A549 (cell line): ENCODE measurements at regions of chr11 and their contacts with region 1.

Region 1: GRCh38 chr11:128956401-128957201 is 13.9 kb upstream of the TP53AIP1 start:
- DNase-seq: peak; percentile 62 to 76
- ATAC-seq: peak; percentile 95 to 96
- H3K4me3 ChIP-seq: no peak overlapping the region
- H3K27ac ChIP-seq: no peak overlapping the region
- H3K4me1 ChIP-seq: no peaks in the 10 kb centered on the region
- CTCF ChIP-seq: peak; percentile 65
- EP300 ChIP-seq: no peak
- POLR2A ChIP-seq: no peak
- RAD21 ChIP-seq: peak; percentile 79 to 84

Region 2: GRCh38 chr11:128879817-128880216 is 76.8 kb before region 1 on chr11:
- CTCF ChIA-PET with region 1: interaction called, 123 read pairs
- POLR2A ChIA-PET with region 1: no interaction called
- DNase-seq: no peak
- ATAC-seq: no peak
- H3K4me3 ChIP-seq: no peak overlapping the region
- H3K27ac ChIP-seq: no peak overlapping the region
- H3K4me1 ChIP-seq: no peaks in the 10 kb centered on the region
- CTCF ChIP-seq: no peak
- EP300 ChIP-seq: no peak
- POLR2A ChIP-seq: no peak
- RAD21 ChIP-seq: no peak

Region 3: GRCh38 chr11:128890543-128891368 is 65.8 kb before region 1 on chr11 and contains the start of gene KCNJ5:
- CTCF ChIA-PET with region 1: interaction called, 123 read pairs
- POLR2A ChIA-PET with region 1: no interaction called
- DNase-seq: peak; percentile 7 to 24
- ATAC-seq: peak; percentile 65 to 88
- H3K4me3 ChIP-seq: peak within 1 kb of the TSS; percentile 49
- H3K27ac ChIP-seq: peak within 1 kb of the TSS in 1 of 2 experiments; percentile 37; a peak in 3 of 6 replicates
- H3K4me1 ChIP-seq: no peaks in the 10 kb centered on the region
- CTCF ChIP-seq: no peak
- EP300 ChIP-seq: no peak
- POLR2A ChIP-seq: no peak
- RAD21 ChIP-seq: no peak
- polyA plus RNA-seq, gene KCNJ5: 0.01 and 0.04 TPM in 2 replicates

Region 4: GRCh38 chr11:128942817-128943427 is 13.7 kb before region 1 on chr11 and contains the start of gene TP53AIP1:
- CTCF ChIA-PET with region 1: interaction called, 26 read pairs
- POLR2A ChIA-PET with region 1: no interaction called
- DNase-seq: no peak
- ATAC-seq: no peak
- H3K4me3 ChIP-seq: no peak within 1 kb of the TSS
- H3K27ac ChIP-seq: no peak within 1 kb of the TSS
- H3K4me1 ChIP-seq: no peaks in the 10 kb centered on the region
- CTCF ChIP-seq: no peak
- EP300 ChIP-seq: no peak
- POLR2A ChIP-seq: no peak
- RAD21 ChIP-seq: no peak
- polyA plus RNA-seq, gene TP53AIP1: 0.08 TPM in 1 of 2 replicates, not detected in the other

Region 5: GRCh38 chr11:128981254-128981653 is 24.7 kb after region 1 on chr11:
- CTCF ChIA-PET with region 1: interaction called, 11 read pairs
- POLR2A ChIA-PET with region 1: no interaction called
- DNase-seq: no peak
- ATAC-seq: no peak
- H3K4me3 ChIP-seq: no peak overlapping the region
- H3K27ac ChIP-seq: no peak overlapping the region
- H3K4me1 ChIP-seq: no peaks in the 10 kb centered on the region
- CTCF ChIP-seq: no peak
- EP300 ChIP-seq: no peak
- POLR2A ChIP-seq: no peak
- RAD21 ChIP-seq: no peak